ENCODE measurements at regions of chr2 and their contacts with region 1.

Region 1: GRCh38 chr2:46547223-46548102 is 68.1 kb downstream of the TMEM247 start:
- DNase-seq: peak in 1 of 10 donors; percentile 90

Region 2: DNA sequence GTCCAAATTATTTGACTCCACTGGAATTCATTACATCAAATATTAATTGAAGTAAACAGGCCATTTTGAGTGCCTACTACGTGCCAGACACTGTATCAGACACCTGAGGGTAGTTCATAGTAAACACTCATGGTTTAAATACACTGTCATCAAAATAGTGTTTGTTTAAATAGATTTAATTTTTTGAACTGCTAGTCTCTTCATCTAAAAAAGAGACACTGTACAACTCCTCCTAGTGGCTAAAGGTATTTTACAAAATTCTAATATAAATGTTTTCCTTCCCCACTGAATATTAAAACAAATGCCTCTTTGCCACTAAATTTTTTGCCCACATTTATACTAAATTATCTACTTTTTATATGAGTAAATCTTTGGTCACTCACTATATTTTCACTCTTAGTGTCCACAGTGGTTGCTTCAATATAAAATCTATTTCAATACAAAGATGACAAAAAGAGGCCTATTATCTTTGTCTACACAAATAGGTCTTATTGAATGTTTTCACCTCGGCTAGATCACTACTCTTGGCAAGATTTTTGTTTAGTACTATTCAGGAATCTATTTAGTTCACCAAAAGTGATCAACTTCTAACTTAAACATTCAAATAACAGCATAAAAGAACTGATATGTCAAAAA is 54.0 kb after region 1 on chr2:
- intact Hi-C with region 1: loop called (anchors 5 kb)
- DNase-seq: no peak

Measured in posterior cingulate gyrus (tissue), 11 donors.